ENCODE measurements at regions of chr10 and their contacts with region 1.

Region 1: GRCh38 chr10:17607603-17608332 is 9.4 kb downstream of the HACD1 start:
- DNase-seq: peak; percentile 60
- CTCF ChIP-seq: peak; percentile 75

Region 2: GRCh38 chr10:17597386-17597785 is 10.4 kb before region 1 on chr10:
- CTCF ChIA-PET with region 1: interaction called, 11 read pairs
- POLR2A ChIA-PET with region 1: no interaction called
- DNase-seq: no peak
- CTCF ChIP-seq: no peak

Region 3: GRCh38 chr10:17742918-17743317 is 135.2 kb after region 1 on chr10:
- CTCF ChIA-PET with region 1: interaction called, 10 read pairs
- POLR2A ChIA-PET with region 1: no interaction called
- DNase-seq: peak; percentile 59
- CTCF ChIP-seq: peak; percentile 75